CD4-positive, alpha-beta T cell (primary cell): ENCODE measurements at regions of chr9 and their contacts with region 1.

Region 1: DNA sequence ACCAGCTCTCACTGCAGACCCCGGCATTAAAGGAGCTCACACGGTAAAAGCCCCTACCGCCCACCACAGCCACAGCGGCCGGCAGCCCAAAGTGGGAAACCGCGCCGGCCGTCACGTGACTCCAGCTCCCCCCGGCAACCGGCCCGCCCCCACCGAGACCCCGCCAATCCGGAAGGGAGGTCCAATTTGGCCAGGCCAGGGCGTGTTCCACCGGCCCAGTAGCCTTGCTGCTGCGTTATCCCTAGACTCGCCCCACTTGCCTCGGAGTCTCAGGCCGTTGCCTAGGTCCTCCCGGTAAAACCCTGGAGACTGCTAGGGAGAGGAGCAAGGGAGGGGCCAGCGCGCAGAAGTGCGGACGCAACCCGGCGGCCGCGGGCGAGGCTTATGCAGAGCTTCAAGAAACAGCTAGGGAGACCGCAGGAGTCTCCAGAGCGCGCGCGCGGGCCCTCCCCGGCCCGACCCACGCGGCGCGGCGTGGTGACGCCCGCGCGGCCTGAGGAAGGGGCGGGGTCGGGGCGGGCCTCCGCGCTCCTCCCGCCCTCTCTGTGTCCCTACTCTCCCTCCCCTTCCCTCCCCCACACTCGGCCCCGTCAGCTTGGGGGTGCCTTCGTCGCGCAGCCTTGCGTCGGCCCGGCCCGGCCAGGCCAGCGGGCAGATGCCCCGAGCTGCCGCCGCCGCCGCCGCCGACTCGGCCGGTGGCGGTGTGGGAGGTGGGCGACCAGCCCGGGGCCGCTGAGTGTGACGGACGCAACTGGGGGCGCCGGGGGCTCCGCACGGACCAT is at the start of gene RIC1:
- DNase-seq: peak; percentile 74 to 96 (median 86)
- ATAC-seq: peak; percentile 79
- H3K4me3 ChIP-seq: peak within 1 kb of the TSS; percentile 88
- H3K4me3 Mint-ChIP-seq: peak within 1 kb of the TSS; percentile 99
- H3K27ac ChIP-seq: peak within 1 kb of the TSS; percentile 85
- H3K27ac Mint-ChIP-seq: peak within 1 kb of the TSS; percentile 97
- H3K4me1 ChIP-seq: peaks cover 42% of the 10 kb centered on the region
- H3K4me1 Mint-ChIP-seq: peaks cover 66% of the 10 kb centered on the region
- H3K27me3 ChIP-seq: no peaks in the 10 kb centered on the region
- H3K27me3 Mint-ChIP-seq: no peaks in the 10 kb centered on the region
- CTCF ChIP-seq: no peak
- total RNA-seq, gene RIC1: 24.7 to 26.3 TPM

Region 2: GRCh38 chr9:4679268-4680172 is 949.2 kb before region 1 on chr9 and contains the start of gene CDC37L1:
- CTCF ChIA-PET with region 1: no interaction called
- POLR2A ChIA-PET with region 1: interaction called, 5 read pairs
- intact Hi-C with region 1: loop called (anchors 10 kb)
- DNase-seq: peak; percentile 97 to 100 (median 99)
- ATAC-seq: peak; percentile 82
- H3K4me3 ChIP-seq: peak within 1 kb of the TSS; percentile 95
- H3K4me3 Mint-ChIP-seq: no peak within 1 kb of the TSS
- H3K27ac ChIP-seq: peak within 1 kb of the TSS; percentile 95
- H3K27ac Mint-ChIP-seq: no peak within 1 kb of the TSS
- H3K4me1 ChIP-seq: peaks cover 20% of the 10 kb centered on the region
- H3K4me1 Mint-ChIP-seq: peaks cover 17% of the 10 kb centered on the region
- H3K27me3 ChIP-seq: no peaks in the 10 kb centered on the region
- H3K27me3 Mint-ChIP-seq: no peaks in the 10 kb centered on the region
- CTCF ChIP-seq: peak; percentile 74
- total RNA-seq, gene CDC37L1: 49.1 to 53.4 TPM

Region 3: DNA sequence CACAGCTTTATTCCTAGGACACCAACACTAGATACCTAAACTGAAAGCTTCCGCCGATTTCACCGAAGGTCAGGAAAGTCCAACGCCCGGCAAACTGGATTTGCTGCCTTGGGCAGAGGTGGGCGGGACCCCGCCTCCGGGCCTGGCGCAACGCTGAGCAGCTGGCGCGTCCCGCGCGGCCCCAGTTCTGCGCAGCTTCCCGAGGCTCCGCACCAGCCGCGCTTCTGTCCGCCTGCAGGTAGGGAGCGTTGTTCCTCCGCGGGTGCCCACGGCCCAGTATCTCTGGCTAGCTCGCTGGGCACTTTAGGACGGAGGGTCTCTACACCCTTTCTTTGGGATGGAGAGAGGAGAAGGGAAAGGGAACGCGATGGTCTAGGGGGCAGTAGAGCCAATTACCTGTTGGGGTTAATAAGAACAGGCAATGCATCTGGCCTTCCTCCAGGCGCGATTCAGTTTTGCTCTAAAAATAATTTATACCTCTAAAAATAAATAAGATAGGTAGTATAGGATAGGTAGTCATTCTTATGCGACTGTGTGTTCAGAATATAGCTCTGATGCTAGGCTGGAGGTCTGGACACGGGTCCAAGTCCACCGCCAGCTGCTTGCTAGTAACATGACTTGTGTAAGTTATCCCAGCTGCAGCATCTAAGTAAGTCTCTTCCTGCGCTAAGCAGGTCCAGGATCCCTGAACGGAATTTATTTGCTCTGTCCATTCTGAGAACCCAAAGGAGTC is 178.2 kb before region 1 on chr9 and contains the start of gene CD274:
- CTCF ChIA-PET with region 1: interaction called, 4 read pairs
- POLR2A ChIA-PET with region 1: interaction called, 28 read pairs
- intact Hi-C with region 1: no loop called
- DNase-seq: peak; percentile 57 to 92 (median 70)
- ATAC-seq: peak; percentile 94
- H3K4me3 ChIP-seq: peak within 1 kb of the TSS; percentile 69
- H3K4me3 Mint-ChIP-seq: peak within 1 kb of the TSS; percentile 88
- H3K27ac ChIP-seq: peak within 1 kb of the TSS; percentile 77 to 87
- H3K27ac Mint-ChIP-seq: peak within 1 kb of the TSS; percentile 95
- H3K4me1 ChIP-seq: peaks cover 34% of the 10 kb centered on the region
- H3K4me1 Mint-ChIP-seq: peaks cover 74% of the 10 kb centered on the region
- H3K27me3 ChIP-seq: no peaks in the 10 kb centered on the region
- H3K27me3 Mint-ChIP-seq: no peaks in the 10 kb centered on the region
- CTCF ChIP-seq: peak; percentile 76
- total RNA-seq, gene CD274: 5.3 to 6.3 TPM

Region 4: DNA sequence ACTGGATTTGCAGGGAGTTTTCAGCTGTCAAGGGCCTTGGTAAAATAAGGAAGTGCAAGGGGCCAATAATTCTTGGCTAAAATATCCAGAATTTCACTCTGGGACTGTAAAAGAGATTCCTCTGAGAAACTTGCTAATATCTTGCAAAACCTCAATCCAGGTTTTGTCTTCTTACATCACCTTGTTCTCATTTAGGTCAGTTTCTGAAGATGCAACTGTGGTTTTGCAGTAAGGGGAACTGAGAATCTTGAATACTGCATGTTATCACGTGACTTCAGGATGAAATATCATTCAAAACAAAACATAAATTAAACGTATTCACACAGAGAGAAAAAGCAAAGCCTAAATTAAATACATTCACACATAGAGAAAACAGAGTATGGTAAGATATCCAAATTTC is 34.8 kb before region 1 on chr9:
- CTCF ChIA-PET with region 1: no interaction called
- POLR2A ChIA-PET with region 1: interaction called, 5 read pairs
- intact Hi-C with region 1: loop called in 1 of 2 experiments (anchors 5 kb)
- DNase-seq: peak in 1 of 14 experiments; percentile 18
- ATAC-seq: no peak
- H3K4me3 ChIP-seq: no peak overlapping the region
- H3K4me3 Mint-ChIP-seq: no peak overlapping the region
- H3K27ac ChIP-seq: no peak overlapping the region
- H3K27ac Mint-ChIP-seq: no peak overlapping the region
- H3K4me1 ChIP-seq: no peaks in the 10 kb centered on the region
- H3K4me1 Mint-ChIP-seq: peaks cover 11% of the 10 kb centered on the region
- H3K27me3 ChIP-seq: no peaks in the 10 kb centered on the region
- H3K27me3 Mint-ChIP-seq: no peaks in the 10 kb centered on the region
- CTCF ChIP-seq: no peak

Region 5: DNA sequence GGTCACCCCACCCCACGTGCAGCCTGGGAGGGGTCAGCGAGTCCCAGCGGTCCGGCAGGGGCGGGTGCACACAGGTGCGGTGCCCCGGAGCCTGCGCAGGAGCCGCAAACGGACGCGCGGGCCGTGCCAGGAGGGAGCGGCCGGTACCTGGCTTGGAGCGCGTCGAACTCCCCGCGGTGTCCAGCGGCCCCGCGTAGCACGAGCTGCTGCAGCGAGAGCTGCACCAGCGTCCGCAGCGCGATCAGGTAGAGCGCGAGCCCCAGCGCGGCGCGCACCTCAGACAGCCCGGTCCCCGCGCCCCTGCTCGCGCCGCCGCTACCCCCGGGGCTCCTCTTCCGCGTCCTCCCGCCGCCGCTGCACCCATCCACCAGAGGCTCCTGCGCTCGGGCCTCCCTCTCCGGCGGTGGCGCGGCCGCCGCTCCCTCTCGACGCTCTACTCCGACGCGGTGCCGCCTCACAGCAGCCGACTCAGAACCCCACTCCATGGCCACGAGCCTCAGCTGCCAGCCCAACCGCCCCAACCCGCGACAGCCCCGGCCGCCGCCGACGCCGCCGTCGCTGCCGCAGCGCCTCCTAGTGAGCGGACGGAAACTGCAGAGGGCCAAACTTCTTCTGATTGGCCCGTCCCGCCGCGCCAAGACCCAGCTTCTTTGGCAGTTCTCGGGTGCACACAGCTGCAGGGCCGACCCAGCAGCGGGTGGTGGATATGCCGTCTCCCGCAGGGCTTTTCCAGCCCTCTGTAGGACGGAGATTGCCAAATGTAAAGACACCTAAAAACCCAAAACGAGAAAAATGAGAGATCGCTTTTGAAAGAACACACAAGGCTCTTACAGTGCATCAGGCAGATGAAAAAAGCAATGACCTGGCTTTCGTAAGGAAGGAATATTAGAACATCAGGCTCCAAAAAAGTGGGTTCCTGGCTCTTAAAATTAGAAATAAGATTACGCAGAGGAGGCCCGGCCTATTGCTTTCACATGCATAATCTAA is 204.1 kb after region 1 on chr9 and contains the start of gene ERMP1:
- CTCF ChIA-PET with region 1: interaction called, 5 read pairs
- POLR2A ChIA-PET with region 1: interaction called, 10 read pairs
- intact Hi-C with region 1: loop called (anchors 2 to 5 kb)
- DNase-seq: peak; percentile 81 to 95 (median 90)
- ATAC-seq: peak; percentile 88
- H3K4me3 ChIP-seq: peak within 1 kb of the TSS; percentile 80
- H3K4me3 Mint-ChIP-seq: peak within 1 kb of the TSS; percentile 99
- H3K27ac ChIP-seq: peak within 1 kb of the TSS in 1 of 2 donors; percentile 36
- H3K27ac Mint-ChIP-seq: peak within 1 kb of the TSS; percentile 85
- H3K4me1 ChIP-seq: peaks cover 26% of the 10 kb centered on the region
- H3K4me1 Mint-ChIP-seq: peaks cover 53% of the 10 kb centered on the region
- H3K27me3 ChIP-seq: no peaks in the 10 kb centered on the region
- H3K27me3 Mint-ChIP-seq: no peaks in the 10 kb centered on the region
- CTCF ChIP-seq: peak; percentile 89
- total RNA-seq, gene ERMP1: 5.8 to 6.8 TPM

Region 6: DNA sequence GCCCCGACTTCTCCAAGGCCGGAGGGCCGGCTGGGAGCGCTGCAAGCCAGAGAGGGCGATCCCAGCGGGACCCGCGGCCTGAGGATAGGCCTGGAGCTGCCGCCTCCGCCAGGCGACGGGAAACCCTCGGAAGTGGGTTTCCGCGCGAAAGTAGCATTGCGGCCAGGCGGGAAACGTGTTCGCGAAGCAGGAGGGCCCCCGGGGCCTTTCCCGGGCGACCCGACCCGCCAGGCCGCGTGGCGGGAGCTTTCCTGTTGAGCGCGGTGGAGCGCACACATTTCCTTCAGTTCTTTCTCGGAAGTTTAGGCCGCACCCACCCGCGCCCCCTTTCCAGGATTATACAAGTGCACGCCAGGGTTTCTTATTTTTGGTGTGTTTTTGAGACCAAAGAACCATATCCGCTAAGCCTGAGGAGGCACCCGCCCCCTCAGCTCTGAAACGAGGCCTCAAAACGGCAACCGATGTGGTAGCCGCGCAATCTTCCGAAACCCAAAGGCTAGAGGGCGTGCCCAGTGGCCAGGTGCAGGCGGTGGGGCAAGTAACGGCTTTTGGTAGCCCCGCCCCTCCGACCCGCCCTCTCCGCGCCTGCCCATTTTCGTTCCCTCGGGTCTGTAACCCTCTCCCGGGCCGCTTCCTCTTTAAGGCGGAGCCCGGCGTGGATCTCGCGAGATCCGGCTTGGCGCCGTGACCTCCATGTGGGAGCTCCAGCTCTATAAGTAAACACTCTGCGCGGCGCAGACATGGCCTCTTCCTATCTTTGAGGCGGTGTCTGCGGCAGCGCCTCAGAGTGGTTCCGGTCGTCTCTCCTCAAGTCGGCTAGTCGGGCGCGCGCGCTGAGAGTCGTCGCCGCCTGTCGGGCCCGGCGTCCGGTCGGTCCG is 784.0 kb after region 1 on chr9 and contains the start of gene UHRF2:
- CTCF ChIA-PET with region 1: no interaction called
- POLR2A ChIA-PET with region 1: interaction called, 15 read pairs
- intact Hi-C with region 1: loop called in 1 of 2 experiments (anchors 5 kb)
- DNase-seq: peak; percentile 98 to 100 (median 99)
- ATAC-seq: peak; percentile 90
- H3K4me3 ChIP-seq: peak within 1 kb of the TSS; percentile 70
- H3K4me3 Mint-ChIP-seq: peak within 1 kb of the TSS; percentile 93
- H3K27ac ChIP-seq: peak within 1 kb of the TSS; percentile 81 to 91
- H3K27ac Mint-ChIP-seq: peak within 1 kb of the TSS; percentile 88
- H3K4me1 ChIP-seq: peaks cover 32% of the 10 kb centered on the region
- H3K4me1 Mint-ChIP-seq: peaks cover 42% of the 10 kb centered on the region
- H3K27me3 ChIP-seq: no peaks in the 10 kb centered on the region
- H3K27me3 Mint-ChIP-seq: no peaks in the 10 kb centered on the region
- CTCF ChIP-seq: no peak
- total RNA-seq, gene UHRF2: 141 to 149 TPM